ENCODE measurements at regions of chr3 and their contacts with region 1.

Region 1: GRCh38 chr3:191376516-191377141 is 46.3 kb upstream of the UTS2B start:
- DNase-seq: no peak
- H3K4me3 Mint-ChIP-seq: no peak overlapping the region
- H3K27ac Mint-ChIP-seq: no peak overlapping the region
- H3K4me1 Mint-ChIP-seq: peaks cover 12% of the 10 kb centered on the region
- H3K27me3 Mint-ChIP-seq: no peaks in the 10 kb centered on the region

Region 2: GRCh38 chr3:191111722-191112121 is 264.9 kb before region 1 on chr3:
- intact Hi-C with region 1: no loop called
- DNase-seq: no peak
- H3K4me3 Mint-ChIP-seq: no peak overlapping the region
- H3K27ac Mint-ChIP-seq: no peak overlapping the region
- H3K4me1 Mint-ChIP-seq: no peaks in the 10 kb centered on the region
- H3K27me3 Mint-ChIP-seq: no peaks in the 10 kb centered on the region

Region 3: DNA sequence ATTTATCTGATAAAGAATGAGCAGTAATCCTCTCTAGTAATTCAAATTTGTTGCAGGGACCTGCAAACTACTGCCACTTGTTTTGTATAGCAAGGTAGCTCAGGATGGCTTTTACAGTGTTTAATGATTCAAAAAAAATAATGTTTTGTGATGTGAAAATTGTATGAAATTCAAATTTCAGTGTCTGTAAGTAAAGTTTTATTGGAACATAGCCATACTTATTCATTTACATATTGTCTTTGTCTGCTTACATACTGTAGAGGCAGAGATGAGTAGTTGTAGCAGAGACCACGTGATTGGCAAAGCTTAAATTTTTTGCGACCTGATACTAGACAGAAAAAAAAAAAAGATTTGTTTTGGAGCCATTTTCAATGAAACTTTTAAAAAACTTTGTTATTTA is 39.8 kb before region 1 on chr3:
- intact Hi-C with region 1: loop called (anchors 5 kb)
- DNase-seq: no peak
- H3K4me3 Mint-ChIP-seq: no peak overlapping the region
- H3K27ac Mint-ChIP-seq: no peak overlapping the region
- H3K4me1 Mint-ChIP-seq: peaks cover 36% of the 10 kb centered on the region
- H3K27me3 Mint-ChIP-seq: peaks cover 3% of the 10 kb centered on the region

Region 4: DNA sequence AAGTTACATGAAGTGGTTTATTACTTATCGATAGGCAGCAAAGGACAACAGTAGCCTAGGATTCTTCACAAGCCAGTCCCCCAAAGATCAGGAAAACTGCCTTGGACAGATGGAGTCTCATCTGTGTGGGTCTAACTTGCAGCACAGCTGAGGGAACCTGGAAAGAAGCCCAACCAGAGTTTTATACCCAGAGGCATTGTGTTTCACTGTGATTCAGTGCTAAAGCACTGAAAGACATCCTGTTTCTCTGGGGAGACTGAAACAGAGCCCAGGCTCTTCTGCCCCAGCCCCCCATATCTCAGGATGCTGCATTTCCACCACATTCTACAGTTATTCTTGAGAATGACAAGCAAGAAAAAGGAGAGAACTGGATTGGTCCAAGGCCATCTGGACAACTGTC is 36.1 kb after region 1 on chr3:
- intact Hi-C with region 1: no loop called
- DNase-seq: no peak
- H3K4me3 Mint-ChIP-seq: no peak overlapping the region
- H3K27ac Mint-ChIP-seq: no peak overlapping the region
- H3K4me1 Mint-ChIP-seq: no peaks in the 10 kb centered on the region
- H3K27me3 Mint-ChIP-seq: no peaks in the 10 kb centered on the region

Region 5: DNA sequence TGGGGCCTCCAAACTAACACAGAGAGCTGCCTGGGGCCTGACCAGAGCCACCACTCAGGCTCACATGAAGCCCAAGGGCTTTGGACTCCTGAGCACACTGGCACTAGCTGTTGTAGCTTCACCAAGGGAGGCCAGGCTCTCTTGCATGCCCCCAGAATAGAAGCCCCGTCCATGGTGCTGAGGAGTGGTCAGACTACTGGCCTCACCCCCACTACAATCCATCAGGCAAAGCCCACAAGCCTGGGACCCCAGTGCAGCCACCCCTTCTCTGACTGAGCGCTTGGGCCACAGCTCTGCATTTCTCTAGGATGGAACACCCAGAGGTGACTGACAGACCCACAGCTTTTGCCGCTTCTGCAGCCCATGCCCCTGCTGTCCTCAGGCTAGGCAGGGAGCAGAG is 265.2 kb after region 1 on chr3:
- intact Hi-C with region 1: no loop called
- DNase-seq: no peak
- H3K4me3 Mint-ChIP-seq: no peak overlapping the region
- H3K27ac Mint-ChIP-seq: no peak overlapping the region
- H3K4me1 Mint-ChIP-seq: no peaks in the 10 kb centered on the region
- H3K27me3 Mint-ChIP-seq: no peaks in the 10 kb centered on the region